ENCODE measurements at regions of chr6 and their contacts with region 1.

Region 1: GRCh38 chr6:158644231-158645063 is at the start of gene DYNLT1:
- DNase-seq: peak; percentile 88
- H3K4me3 Mint-ChIP-seq: peak within 1 kb of the TSS; percentile 97
- H3K27ac Mint-ChIP-seq: peak within 1 kb of the TSS; percentile 97
- H3K4me1 Mint-ChIP-seq: peaks cover 69% of the 10 kb centered on the region
- H3K27me3 Mint-ChIP-seq: no peaks in the 10 kb centered on the region
- total RNA-seq, gene DYNLT1: 94.4 and 108 TPM in 2 replicates

Region 2: GRCh38 chr6:158559895-158560835 is 84.3 kb before region 1 on chr6 and contains the start of gene TMEM181:
- intact Hi-C with region 1: loop called (anchors 5 kb)
- DNase-seq: peak; percentile 83
- H3K4me3 Mint-ChIP-seq: peak within 1 kb of the TSS; percentile 97
- H3K27ac Mint-ChIP-seq: peak within 1 kb of the TSS; percentile 95
- H3K4me1 Mint-ChIP-seq: peaks cover 38% of the 10 kb centered on the region
- H3K27me3 Mint-ChIP-seq: peaks cover 6% of the 10 kb centered on the region
- total RNA-seq, gene TMEM181: 16.3 and 16.9 TPM in 2 replicates

Region 3: GRCh38 chr6:158571826-158572652 is 72.4 kb before region 1 on chr6:
- intact Hi-C with region 1: loop called (anchors 1 kb)
- DNase-seq: no peak
- H3K4me3 Mint-ChIP-seq: no peak overlapping the region
- H3K27ac Mint-ChIP-seq: no peak overlapping the region
- H3K4me1 Mint-ChIP-seq: peaks cover 59% of the 10 kb centered on the region
- H3K27me3 Mint-ChIP-seq: no peaks in the 10 kb centered on the region

Region 4: DNA sequence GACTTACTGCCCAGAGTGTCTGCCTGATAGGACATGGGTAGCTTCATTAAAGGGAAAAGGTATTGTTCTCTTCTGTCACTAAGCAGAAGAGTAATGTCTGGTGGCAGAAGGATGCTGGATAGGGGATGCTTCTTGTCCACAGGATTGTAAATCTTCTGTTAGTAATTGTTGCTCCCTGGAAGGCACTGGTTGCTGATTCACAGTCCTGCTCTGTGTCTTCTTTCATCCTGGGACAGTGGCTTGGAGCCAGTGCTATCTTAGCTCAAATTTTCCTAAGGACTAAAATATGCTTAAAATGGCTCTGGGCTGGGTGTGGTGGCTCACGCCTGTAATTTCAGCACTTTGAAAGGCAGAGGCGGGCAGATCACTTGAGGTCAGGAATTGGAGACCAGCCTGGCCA is 53.4 kb after region 1 on chr6:
- intact Hi-C with region 1: loop called (anchors 2 kb)
- DNase-seq: no peak
- H3K4me3 Mint-ChIP-seq: no peak overlapping the region
- H3K27ac Mint-ChIP-seq: peak overlapping the region; percentile 91
- H3K4me1 Mint-ChIP-seq: peaks cover 25% of the 10 kb centered on the region
- H3K27me3 Mint-ChIP-seq: no peaks in the 10 kb centered on the region

Region 5: DNA sequence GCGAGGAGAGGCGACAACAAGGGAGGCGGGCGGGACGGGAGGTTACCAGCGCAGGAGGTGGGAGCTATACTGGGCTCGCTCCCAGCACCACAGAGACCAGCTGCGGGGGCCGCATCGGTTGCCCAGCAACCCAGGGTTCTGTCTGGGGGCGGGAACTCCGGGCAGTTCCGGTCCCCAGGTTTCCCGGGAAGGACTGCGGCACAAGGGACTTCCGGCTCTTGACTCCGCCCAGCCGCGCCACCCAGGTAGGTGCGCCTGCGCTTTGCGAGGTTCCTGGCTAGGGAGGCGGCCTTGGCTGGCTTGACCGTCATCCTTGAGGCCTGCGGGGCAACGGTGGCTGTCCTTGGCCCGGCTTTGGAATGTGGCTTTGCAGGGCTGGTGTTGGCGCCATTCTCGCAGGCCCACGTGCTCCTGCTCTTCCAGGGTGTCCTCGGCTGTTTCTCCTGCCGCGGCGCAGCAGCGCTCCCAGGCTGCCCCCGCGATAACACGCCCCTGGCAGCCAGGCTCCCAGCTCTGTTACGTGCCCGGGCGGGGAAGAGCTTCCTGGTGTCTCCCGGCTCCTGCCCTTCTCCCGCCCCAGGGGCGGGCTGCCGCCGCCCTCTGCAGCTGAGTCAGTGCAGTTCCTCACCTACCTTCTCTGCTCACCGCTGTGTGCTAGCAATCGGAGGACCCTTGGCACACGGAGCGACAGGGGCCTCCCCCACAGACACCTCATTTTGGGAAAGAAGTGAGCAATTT is 355.4 kb after region 1 on chr6 and contains the start of gene RSPH3:
- intact Hi-C with region 1: loop called (anchors 5 kb)
- DNase-seq: peak; percentile 87
- H3K4me3 Mint-ChIP-seq: peak within 1 kb of the TSS; percentile 96
- H3K27ac Mint-ChIP-seq: peak within 1 kb of the TSS; percentile 89
- H3K4me1 Mint-ChIP-seq: peaks cover 49% of the 10 kb centered on the region
- H3K27me3 Mint-ChIP-seq: no peaks in the 10 kb centered on the region
- total RNA-seq, gene RSPH3: 4.9 and 5.1 TPM in 2 replicates

Region 6: DNA sequence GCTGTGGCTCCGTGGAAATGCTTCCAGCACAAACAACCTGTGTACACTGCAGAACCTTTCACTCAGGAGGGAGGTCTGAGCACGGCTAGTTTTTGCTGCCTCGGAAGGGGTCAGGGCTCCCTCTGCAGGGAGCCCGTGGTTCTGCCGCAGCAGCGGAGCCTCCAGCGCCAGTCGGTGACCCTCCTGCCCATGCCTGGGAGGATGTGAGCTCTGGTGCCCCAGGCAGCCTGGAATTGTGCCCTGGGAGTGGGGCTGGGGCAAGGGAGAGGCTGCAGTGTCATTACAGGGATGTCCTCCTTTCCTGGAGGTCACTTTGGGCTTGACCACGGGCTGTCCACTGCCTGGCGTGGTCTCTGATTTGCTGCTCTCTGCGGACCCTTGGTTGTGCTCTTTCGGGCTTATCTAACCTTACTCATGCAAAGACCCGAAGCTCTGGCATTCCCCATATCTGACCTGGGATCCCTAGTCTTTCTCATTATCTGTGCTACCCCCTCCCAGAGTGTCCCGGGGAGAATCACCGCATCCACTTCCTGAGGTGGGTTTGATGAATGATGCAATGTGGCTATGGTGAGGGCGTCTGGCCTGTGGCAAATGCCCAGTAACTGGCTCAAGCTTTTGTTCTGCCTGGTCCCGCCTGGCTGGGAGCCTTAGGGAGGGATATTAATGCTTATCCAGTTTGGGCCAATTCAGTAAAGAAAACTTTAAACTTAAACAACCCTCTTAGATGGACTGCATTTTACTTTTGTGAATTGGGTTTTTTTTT is 459.9 kb after region 1 on chr6:
- intact Hi-C with region 1: loop called (anchors 5 kb)
- DNase-seq: peak; percentile 69
- H3K4me3 Mint-ChIP-seq: peak overlapping the region; percentile 11
- H3K27ac Mint-ChIP-seq: peak overlapping the region; percentile 79
- H3K4me1 Mint-ChIP-seq: peaks cover 75% of the 10 kb centered on the region
- H3K27me3 Mint-ChIP-seq: no peaks in the 10 kb centered on the region